ENCODE measurements at regions of chr10 and their contacts with region 1.

Region 1: DNA sequence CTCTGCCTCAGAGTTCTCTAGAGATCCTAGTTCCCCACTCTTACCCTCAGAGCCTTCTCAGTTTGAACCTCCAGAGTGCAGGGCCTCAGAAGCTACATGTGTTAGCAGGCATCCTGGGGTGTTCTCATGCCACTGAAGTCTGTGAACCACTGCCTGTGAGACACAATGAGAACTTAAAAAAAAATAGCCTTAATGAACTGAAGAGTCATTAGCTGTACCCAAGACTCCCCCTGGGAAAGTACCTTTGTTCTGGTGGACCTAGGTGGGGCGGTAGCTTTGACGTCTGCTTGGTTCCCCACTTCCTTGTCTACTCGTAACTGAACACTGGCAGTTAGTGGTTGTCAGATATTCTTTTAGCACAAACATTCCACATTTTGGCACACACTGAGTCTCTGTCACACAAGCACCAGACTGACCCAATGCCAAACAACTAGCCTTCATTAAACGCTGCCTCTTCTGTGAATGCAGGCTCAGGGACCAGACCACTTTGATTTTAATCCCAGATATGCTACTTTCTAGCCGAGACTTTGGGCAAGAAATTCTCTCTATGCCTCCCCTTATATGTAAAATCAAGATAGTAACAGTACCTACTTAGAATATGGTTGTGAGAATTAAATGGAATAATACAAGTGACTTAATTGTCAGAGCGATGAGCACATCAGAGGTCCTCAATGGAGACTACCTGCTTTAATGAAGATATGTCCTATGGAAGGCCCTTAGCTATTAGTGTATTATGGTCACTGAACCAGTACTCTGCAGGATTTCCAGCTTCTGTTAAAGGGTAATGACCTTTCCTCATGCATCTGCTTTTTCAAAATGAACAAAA is 75.3 kb upstream of the CC2D2B start:
- DNase-seq: peak in 1 of 9 donors; percentile 48
- ATAC-seq: peak; percentile 90
- H3K4me3 ChIP-seq: no peak overlapping the region
- H3K4me3 Mint-ChIP-seq: peak overlapping the region in 1 of 10 donors; percentile 88
- H3K27ac ChIP-seq: no peak overlapping the region
- H3K27ac Mint-ChIP-seq: peak overlapping the region in 1 of 9 donors; percentile 98
- H3K4me1 ChIP-seq: peaks cover 0 to 17% of the 10 kb centered on the region in 2 donors
- H3K4me1 Mint-ChIP-seq: peaks cover 0 to 58% (median 0%) of the 10 kb centered on the region in 7 donors
- H3K27me3 ChIP-seq: no peaks in the 10 kb centered on the region
- H3K27me3 Mint-ChIP-seq: no peaks in the 10 kb centered on the region

Region 2: GRCh38 chr10:95755511-95756004 is 76.9 kb before region 1 on chr10:
- CTCF ChIA-PET with region 1: no interaction called
- POLR2A ChIA-PET with region 1: no interaction called
- intact Hi-C with region 1: loop called in 1 of 2 experiments (anchors 1 kb)
- DNase-seq: no peak
- ATAC-seq: peak; percentile 64
- H3K4me3 ChIP-seq: no peak overlapping the region
- H3K4me3 Mint-ChIP-seq: peak overlapping the region in 3 of 10 donors; percentile 9 to 79 (median 27)
- H3K27ac ChIP-seq: no peak overlapping the region
- H3K27ac Mint-ChIP-seq: peak overlapping the region in 1 of 9 donors; percentile 77
- H3K4me1 ChIP-seq: peaks cover 0 to 4% of the 10 kb centered on the region in 2 donors
- H3K4me1 Mint-ChIP-seq: peaks cover 0 to 47% (median 7%) of the 10 kb centered on the region in 7 donors
- H3K27me3 ChIP-seq: no peaks in the 10 kb centered on the region
- H3K27me3 Mint-ChIP-seq: peaks cover 18 to 38% (median 27%) of the 10 kb centered on the region in 5 donors

Region 3: DNA sequence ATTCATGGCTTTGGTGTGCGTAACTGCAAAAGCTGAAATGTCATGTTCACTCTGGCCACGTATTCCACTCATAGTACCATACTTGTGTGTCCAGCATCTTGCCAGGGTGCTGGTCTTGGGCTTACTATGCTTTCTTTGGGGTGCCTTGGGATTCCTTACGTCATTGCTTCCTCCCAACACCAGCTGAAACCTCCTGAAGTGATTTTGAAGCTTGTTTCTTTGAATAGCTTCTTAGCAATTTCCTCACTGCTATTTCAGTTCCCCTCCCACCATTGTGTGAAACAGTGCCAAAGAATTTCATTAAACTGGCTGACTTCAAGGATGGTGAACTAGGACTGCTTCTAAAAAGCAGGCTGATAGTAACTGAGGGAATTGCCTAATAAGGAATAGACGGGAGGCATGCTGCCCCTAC is 39.5 kb before region 1 on chr10:
- CTCF ChIA-PET with region 1: no interaction called
- POLR2A ChIA-PET with region 1: no interaction called
- intact Hi-C with region 1: loop called in 1 of 2 experiments (anchors 5 kb)
- DNase-seq: no peak
- ATAC-seq: peak; percentile 27
- H3K4me3 ChIP-seq: no peak overlapping the region
- H3K4me3 Mint-ChIP-seq: no peak overlapping the region
- H3K27ac ChIP-seq: no peak overlapping the region
- H3K27ac Mint-ChIP-seq: peak overlapping the region in 1 of 9 donors; percentile 84
- H3K4me1 ChIP-seq: no peaks in the 10 kb centered on the region
- H3K4me1 Mint-ChIP-seq: peaks cover 0 to 67% (median 0%) of the 10 kb centered on the region in 7 donors
- H3K27me3 ChIP-seq: no peaks in the 10 kb centered on the region
- H3K27me3 Mint-ChIP-seq: peaks cover 0 to 12% (median 4%) of the 10 kb centered on the region in 5 donors

Region 4: GRCh38 chr10:95821720-95822119 is 10.7 kb before region 1 on chr10:
- CTCF ChIA-PET with region 1: no interaction called
- POLR2A ChIA-PET with region 1: no interaction called
- intact Hi-C with region 1: loop called in 1 of 2 experiments (anchors 1 kb)
- DNase-seq: no peak
- ATAC-seq: no peak
- H3K4me3 ChIP-seq: no peak overlapping the region
- H3K4me3 Mint-ChIP-seq: peak overlapping the region in 1 of 10 donors; percentile 68
- H3K27ac ChIP-seq: no peak overlapping the region
- H3K27ac Mint-ChIP-seq: peak overlapping the region in 1 of 9 donors; percentile 93
- H3K4me1 ChIP-seq: no peaks in the 10 kb centered on the region
- H3K4me1 Mint-ChIP-seq: peaks cover 0 to 45% (median 0%) of the 10 kb centered on the region in 7 donors
- H3K27me3 ChIP-seq: no peaks in the 10 kb centered on the region
- H3K27me3 Mint-ChIP-seq: peaks cover 0 to 26% (median 14%) of the 10 kb centered on the region in 5 donors

Region 5: DNA sequence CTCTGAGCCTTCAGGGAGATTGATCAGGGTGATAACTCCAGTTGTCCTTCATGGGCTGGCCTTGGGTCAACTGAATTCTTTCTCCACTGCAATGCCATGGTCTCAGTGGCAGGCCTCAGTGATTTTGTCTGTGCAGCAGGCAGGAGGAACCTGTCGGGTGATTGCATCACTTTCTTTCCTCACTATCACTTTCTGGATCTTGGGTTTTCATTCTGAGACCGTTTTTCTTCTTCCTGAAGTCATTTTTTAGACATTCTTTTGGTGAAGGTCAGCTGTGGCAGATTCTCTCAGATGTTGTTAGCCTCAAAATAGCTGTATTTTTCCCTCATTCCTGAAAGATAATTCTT is 970.9 kb after region 1 on chr10:
- CTCF ChIA-PET with region 1: no interaction called
- POLR2A ChIA-PET with region 1: no interaction called
- intact Hi-C with region 1: no loop called
- DNase-seq: no peak
- ATAC-seq: no peak
- H3K4me3 ChIP-seq: no peak overlapping the region
- H3K4me3 Mint-ChIP-seq: no peak overlapping the region
- H3K27ac ChIP-seq: no peak overlapping the region
- H3K27ac Mint-ChIP-seq: no peak overlapping the region
- H3K4me1 ChIP-seq: no peaks in the 10 kb centered on the region
- H3K4me1 Mint-ChIP-seq: peaks cover 0 to 6% (median 0%) of the 10 kb centered on the region in 7 donors
- H3K27me3 ChIP-seq: no peaks in the 10 kb centered on the region
- H3K27me3 Mint-ChIP-seq: peaks cover 9 to 16% (median 12%) of the 10 kb centered on the region in 5 donors